ENCODE measurements at regions of chr20 and their contacts with region 1.

Region 1: DNA sequence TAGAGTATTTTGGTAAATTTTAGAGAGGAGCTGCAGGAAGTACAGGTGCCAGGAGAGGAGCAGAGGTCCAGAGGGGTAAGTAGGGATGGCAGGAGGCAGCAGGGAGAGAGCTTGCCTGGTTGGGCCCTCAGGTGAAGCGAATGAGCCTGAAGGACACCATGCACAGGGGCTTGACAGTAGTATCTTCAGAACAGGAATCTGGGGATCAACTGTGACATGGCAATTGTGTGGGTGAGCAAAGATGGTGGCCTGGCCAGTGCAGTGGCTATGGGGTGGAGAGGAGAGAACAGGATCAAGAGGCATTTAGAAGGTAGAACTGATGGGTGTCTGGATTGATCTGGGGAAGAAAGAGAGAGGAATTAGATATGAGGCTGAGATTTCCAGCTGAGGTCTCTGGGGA is 68.7 kb upstream of the RNF24 start:
- DNase-seq: no peak
- H3K4me3 ChIP-seq: no peak overlapping the region
- H3K27ac ChIP-seq: no peak overlapping the region
- H3K4me1 ChIP-seq: no peaks in the 10 kb centered on the region
- H3K27me3 ChIP-seq: no peaks in the 10 kb centered on the region
- CTCF ChIP-seq: no peak
- POLR2A ChIP-seq: no peak

Region 2: GRCh38 chr20:3218307-3218988 is 865.6 kb before region 1 on chr20:
- intact Hi-C with region 1: no loop called
- DNase-seq: no peak
- H3K4me3 ChIP-seq: no peak overlapping the region
- H3K27ac ChIP-seq: no peak overlapping the region
- H3K4me1 ChIP-seq: no peaks in the 10 kb centered on the region
- H3K27me3 ChIP-seq: no peaks in the 10 kb centered on the region
- CTCF ChIP-seq: peak; percentile 46 to 74 (median 60)
- POLR2A ChIP-seq: no peak

Region 3: DNA sequence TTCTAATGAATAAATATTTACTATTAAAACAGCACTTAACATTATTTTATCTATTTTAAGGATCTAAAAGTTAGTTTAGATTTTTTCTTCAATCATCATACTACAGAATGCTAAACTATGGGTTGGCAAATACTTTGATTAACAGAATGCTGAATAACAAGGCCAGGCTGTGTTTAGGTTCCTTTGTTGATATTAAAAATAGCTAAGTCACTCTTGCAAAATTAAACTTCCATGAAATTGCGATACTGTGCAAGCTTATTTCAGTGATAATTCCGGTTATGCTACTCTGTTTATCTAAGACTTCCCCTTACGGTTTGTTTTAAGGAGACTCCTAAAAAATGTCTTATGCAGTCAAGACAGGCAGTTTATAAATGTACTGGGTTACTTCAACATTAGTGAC is 71.5 kb before region 1 on chr20:
- intact Hi-C with region 1: loop called (anchors 2 kb)
- DNase-seq: no peak
- H3K4me3 ChIP-seq: no peak overlapping the region
- H3K27ac ChIP-seq: no peak overlapping the region
- H3K4me1 ChIP-seq: no peaks in the 10 kb centered on the region
- H3K27me3 ChIP-seq: no peaks in the 10 kb centered on the region
- CTCF ChIP-seq: no peak
- POLR2A ChIP-seq: no peak

Measured in uterus (tissue), 4 donors.